Testis (tissue), 5 donors: ENCODE measurements at regions of chr21 and their contacts with region 1.

Region 1: DNA sequence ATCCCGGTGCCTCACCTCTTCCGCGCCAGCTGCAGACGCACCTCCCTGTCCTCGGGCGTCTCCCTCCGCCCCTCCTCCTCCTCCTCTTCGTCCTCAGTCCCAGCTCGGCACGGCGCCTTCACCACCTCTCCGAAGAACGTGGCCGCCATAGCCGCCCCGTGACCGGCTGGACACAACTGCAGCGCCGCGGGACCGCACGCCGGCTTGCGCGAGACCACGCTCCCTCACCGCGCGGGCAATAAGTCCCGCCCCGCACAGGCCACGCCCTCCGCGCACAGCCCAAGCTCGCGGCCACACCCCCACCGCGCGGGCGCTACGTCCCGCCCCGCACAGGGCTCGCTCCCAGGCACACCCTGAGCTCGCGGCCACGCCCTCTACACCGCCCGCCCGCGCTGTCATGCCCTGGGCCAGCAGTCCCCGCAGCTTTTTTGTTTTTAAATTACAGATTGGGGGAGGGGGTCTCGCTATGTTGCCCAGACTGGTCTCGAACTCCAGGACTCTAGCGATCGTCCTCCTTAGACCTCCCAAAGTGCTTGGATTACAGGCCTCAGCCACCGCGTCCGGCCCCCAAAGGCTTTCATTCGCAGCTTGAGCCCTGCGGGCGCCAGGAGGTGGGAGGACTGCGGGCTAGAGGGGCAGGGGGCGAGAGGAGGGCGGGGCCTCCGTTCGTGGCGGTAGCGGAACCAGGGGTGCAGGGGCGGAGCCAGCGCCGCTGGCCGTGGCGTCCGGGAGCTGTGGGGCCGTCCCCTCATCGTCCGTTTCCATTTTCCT is at the start of gene PSMG1:
- DNase-seq: peak; percentile 96
- H3K4me3 ChIP-seq: peak within 1 kb of the TSS; percentile 73 to 93
- H3K27ac ChIP-seq: peak within 1 kb of the TSS; percentile 93
- H3K4me1 ChIP-seq: peaks cover 5% of the 10 kb centered on the region
- H3K27me3 ChIP-seq: no peaks in the 10 kb centered on the region
- CTCF ChIP-seq: no peak
- POLR2A ChIP-seq: peak; percentile 56
- total RNA-seq, gene PSMG1: 95.4 to 113 TPM

Region 2: GRCh38 chr21:39388038-39388810 is 204.8 kb after region 1 on chr21:
- intact Hi-C with region 1: loop called (anchors 10 kb)
- DNase-seq: peak; percentile 94
- H3K4me3 ChIP-seq: peak overlapping the region; percentile 45 to 56
- H3K27ac ChIP-seq: peak overlapping the region; percentile 39 to 69
- H3K4me1 ChIP-seq: peaks cover 12% of the 10 kb centered on the region
- H3K27me3 ChIP-seq: no peaks in the 10 kb centered on the region
- CTCF ChIP-seq: peak; percentile 79 to 95 (median 92)
- POLR2A ChIP-seq: no peak

Region 3: DNA sequence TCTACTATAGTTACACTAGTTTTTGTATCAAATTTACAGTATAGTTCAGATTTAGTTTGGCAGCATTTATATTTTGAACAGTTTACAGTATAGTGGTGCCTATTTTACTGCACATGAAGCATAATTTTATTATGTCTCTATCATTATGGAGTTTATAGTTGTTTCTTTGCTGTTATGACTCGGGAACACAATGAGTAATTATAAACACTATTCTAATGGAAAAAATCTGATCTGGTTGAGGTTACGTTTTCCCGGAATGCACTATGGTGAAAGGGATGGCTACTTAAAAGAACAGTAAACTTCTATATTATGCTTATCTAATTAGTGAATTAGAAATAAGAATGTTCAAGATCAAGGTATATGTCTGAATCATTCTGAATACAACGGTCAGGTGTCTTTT is 251.5 kb after region 1 on chr21:
- intact Hi-C with region 1: no loop called
- DNase-seq: no peak
- H3K4me3 ChIP-seq: no peak overlapping the region
- H3K27ac ChIP-seq: no peak overlapping the region
- H3K4me1 ChIP-seq: no peaks in the 10 kb centered on the region
- H3K27me3 ChIP-seq: no peaks in the 10 kb centered on the region
- CTCF ChIP-seq: no peak
- POLR2A ChIP-seq: no peak